Pancreas (tissue), 10 donors: ENCODE measurements at regions of chr20 and their contacts with region 1.

Region 1: DNA sequence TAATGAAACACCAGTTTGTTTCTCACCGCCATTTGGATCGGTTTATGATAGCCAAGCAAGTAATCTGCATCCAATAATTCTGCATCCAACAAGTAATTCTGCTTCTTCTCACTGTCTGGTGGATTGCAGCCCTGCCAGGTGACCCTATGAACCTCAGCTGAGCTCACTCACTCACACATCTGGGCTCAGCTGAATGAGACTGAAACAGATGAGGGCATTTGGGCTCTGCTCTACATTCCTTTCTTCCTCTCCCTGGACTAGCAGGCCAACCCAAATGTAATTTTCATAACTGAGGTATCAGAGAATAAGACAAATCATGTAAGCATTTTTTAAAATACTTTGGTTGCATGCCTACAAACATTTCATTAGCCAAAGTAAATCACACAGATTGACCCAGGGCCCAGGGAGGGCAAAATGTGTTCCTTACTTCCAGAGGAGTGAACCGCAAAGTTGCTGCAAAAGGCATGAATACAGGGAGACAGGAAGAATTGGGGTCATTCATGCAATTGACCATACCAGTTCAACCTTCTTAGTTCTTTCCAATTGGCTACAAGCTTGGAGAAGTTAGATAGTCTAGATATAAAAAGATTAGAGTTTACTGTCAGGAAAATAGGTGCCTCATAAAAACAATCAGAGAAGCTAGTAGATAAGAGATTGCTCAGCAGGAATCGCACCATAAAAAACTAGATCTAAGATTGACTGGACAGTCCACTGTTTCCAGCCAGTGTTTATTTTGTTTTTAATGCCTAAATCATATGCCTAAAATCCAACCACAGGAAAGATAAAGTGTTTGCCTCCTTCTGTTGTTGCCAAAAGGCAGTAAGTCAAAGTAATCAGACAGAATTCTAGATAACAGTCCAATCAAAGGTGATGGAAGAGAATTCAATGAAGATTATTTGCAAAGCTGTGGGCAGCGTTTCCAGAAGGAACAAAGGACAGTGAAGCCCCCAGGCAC is 43.7 kb downstream of the CBLN4 start:
- DNase-seq: no peak
- ATAC-seq: peak in 3 of 4 donors; percentile 22 to 44 (median 44)
- H3K4me3 ChIP-seq: no peak overlapping the region
- H3K27ac ChIP-seq: no peak overlapping the region
- H3K4me1 ChIP-seq: no peaks in the 10 kb centered on the region
- H3K27me3 ChIP-seq: peaks cover 0 to 4% (median 0%) of the 10 kb centered on the region in 4 donors
- CTCF ChIP-seq: no peak

Region 2: GRCh38 chr20:55760586-55760985 is 201.1 kb before region 1 on chr20:
- intact Hi-C with region 1: no loop called
- DNase-seq: no peak
- ATAC-seq: no peak
- H3K4me3 ChIP-seq: no peak overlapping the region
- H3K27ac ChIP-seq: no peak overlapping the region
- H3K4me1 ChIP-seq: no peaks in the 10 kb centered on the region
- H3K27me3 ChIP-seq: no peaks in the 10 kb centered on the region
- CTCF ChIP-seq: no peak

Region 3: DNA sequence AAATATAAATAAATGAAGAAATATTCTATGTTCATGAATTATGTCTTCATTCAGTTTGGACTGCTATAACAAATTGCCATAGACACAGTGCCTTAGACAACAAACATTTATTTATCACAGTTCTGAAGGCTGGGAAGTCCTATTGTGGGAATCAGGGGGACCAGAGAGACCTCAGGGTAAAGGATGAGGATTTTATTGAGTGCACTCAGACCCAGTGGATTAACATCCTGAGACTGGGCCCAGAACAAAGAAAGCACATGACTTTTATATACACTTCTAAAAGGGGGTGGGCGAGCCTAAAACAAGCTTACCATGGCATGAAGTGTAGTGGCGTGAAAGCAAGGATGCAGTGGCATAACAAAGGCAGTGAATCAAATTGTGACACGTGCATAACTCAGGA is 70.6 kb after region 1 on chr20:
- intact Hi-C with region 1: loop called in 1 of 3 experiments (anchors 10 kb)
- DNase-seq: no peak
- ATAC-seq: no peak
- H3K4me3 ChIP-seq: no peak overlapping the region
- H3K27ac ChIP-seq: no peak overlapping the region
- H3K4me1 ChIP-seq: no peaks in the 10 kb centered on the region
- H3K27me3 ChIP-seq: no peaks in the 10 kb centered on the region
- CTCF ChIP-seq: no peak

Region 4: DNA sequence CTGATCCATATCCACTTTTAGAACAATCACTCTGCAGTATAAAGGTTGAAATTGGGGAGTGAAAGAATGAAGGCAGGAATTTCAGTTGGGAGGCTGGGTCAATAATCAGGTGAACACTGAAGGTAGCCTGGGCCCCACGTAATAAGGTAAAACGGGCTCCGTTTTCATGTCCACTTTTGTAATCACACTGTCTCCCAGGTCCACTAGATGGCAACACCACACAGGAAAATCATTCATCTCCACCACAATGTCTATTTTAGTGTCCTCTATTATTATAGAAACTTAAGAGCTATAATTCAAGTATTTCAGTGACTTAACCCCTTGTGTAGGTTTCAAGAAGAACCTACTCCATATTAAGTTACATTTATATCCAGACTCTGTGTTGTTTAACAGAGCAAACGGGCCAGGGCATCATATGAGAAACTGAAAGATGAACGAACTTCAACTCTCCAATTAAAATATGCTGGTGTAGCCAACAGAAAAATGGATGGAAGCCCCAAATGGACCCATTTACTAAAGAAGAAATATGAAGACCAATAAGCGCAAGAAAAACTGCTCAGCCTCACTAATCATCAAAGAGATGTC is 240.9 kb after region 1 on chr20:
- intact Hi-C with region 1: no loop called
- DNase-seq: no peak
- ATAC-seq: peak in 2 of 4 donors; percentile 27 to 51
- H3K4me3 ChIP-seq: no peak overlapping the region
- H3K27ac ChIP-seq: no peak overlapping the region
- H3K4me1 ChIP-seq: no peaks in the 10 kb centered on the region
- H3K27me3 ChIP-seq: no peaks in the 10 kb centered on the region
- CTCF ChIP-seq: peak in 2 of 4 donors; percentile 25 to 26